GM13976 (cell line): ENCODE measurements at regions of chr17 and their contacts with region 1.

Region 1: GRCh38 chr17:29549177-29549923 is 17.5 kb downstream of the ABHD15 start:
- DNase-seq: peak; percentile 70
- CTCF ChIP-seq: no peak

Region 2: DNA sequence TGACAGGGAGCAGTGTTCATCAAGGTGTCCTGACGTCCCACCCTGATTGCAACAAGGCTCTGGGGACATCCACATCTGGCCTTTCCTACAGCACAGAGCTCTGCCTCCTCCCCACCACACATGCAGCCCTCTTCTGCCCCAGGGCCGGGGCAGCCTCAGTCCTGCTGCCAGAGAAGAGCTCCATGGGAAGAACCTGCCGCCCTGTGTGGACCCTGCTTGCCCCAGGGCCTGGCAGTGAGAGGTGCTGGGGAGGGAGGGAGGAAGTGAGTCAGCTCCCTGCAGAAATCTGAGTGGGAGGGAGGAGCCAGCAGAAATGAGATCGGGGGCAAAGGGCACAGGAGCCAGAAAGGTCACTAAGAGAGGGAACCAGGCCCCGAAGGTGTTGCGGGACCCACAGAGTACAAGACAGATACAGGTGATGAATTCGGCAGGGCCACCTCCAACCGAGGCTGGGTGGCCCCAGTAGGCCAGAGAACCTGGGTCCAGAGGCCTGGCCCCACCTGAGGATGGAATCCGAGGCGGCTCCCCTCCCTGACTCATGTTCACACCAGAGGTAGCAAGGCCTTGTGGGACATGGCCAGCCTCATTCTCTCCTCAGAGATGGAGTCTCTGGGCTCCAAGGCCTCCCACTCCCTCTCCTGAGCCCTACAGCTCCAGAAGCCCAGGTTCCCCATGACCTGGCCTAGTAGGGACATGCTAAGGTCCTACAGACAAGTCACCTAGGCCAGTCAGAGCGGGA is 394.0 kb before region 1 on chr17:
- in situ Hi-C with region 1: loop called (anchors 25 kb)
- DNase-seq: peak; percentile 59
- CTCF ChIP-seq: no peak

Region 3: DNA sequence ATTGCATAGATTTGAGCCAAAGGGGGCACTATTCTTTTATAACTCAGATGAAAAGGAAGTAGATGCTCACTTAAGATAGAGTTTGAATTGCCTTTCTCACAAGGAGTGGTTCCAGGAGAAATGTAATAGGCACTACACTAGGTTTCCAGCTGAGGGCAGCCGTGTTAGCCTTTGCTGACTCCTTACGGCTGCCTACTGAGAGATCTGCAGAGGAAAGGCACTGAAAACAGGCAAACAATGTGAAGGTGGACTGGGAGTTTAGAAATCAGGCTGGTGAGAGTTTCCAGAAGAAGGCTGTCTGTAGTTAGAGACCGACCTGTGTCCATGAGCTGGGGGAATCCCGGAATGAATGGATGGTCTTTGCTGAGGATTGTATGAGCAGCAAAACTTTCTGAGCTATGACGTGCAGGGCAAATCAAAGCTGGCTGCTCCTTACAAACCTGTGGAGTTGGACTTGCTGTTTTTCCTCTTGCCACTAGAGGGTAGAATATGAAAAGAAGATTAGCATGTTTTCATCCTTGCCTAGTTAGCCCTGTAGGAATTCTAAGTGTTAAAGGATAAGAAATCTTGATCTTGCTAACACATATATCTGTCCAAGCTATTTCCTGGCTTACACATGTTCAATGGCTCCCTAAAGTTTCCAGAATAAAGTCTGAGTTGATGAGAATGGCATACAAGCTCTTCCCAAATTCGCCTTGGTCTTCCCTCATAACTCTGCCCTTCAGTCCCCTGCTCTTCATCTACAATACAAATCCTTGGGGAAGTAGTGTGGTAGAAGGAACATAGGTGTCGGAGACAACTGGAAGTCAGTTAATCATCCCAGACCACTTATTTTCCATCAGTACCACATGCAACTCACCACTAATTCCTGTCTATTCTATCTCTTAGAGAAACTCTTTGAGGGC is 179.3 kb before region 1 on chr17:
- in situ Hi-C with region 1: loop called (anchors 10 kb)
- DNase-seq: peak; percentile 72
- CTCF ChIP-seq: peak; percentile 70

Region 4: DNA sequence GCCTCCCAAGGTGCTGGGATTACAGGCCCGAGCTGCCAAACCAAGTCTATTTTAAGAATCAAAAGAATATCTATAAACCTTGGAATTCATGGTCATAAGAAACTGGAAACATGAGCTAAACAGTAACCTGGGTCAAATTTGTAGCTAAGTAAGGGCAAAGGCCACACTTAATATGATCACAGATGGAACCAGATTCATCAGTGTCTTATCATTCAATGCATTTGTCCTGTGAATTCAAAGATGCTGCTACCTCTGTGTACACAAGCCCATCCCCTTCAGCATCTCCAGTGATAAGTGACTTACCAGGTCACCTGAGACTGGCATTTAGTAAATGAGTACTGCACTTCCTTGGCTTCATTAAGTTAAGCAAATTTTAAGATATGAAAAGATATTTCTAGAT is 272.5 kb after region 1 on chr17:
- in situ Hi-C with region 1: no loop called
- DNase-seq: no peak
- CTCF ChIP-seq: no peak